Right cardiac atrium (tissue), 5 donors: ENCODE measurements at regions of chr18 and their contacts with region 1.

Region 1: GRCh38 chr18:9147440-9148202 is 11.0 kb downstream of the ANKRD12 start:
- DNase-seq: no peak
- ATAC-seq: peak; percentile 84 to 85
- H3K4me3 ChIP-seq: no peak overlapping the region
- H3K27ac ChIP-seq: no peak overlapping the region
- H3K4me1 ChIP-seq: peaks cover 2% of the 10 kb centered on the region
- H3K27me3 ChIP-seq: no peaks in the 10 kb centered on the region

Region 2: DNA sequence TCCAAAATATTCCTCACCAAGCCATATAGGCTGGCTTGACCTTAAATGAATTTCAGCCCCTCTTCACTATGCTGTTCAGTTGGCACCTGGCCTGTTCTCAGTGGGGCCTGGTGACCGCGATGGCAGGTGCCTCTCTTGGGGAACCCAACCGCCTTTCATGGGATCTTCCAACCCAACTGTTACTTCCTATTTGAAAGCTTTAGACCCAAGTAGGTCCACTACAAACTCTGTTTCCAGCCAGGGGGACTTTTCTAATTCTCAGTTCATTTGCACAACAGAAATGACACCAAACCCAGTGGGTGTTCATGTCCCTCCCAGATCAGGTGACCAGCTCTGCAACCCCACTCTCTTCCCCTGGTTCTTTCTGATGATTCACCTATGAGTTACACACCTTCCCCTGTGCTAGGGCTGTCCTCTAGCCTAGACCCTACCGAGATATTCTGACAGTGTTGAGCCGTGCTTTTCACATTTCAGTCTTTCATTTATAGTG is 80.8 kb before region 1 on chr18:
- intact Hi-C with region 1: loop called in 3 of 4 experiments (anchors 2 to 5 kb)
- DNase-seq: no peak
- ATAC-seq: no peak
- H3K4me3 ChIP-seq: no peak overlapping the region
- H3K27ac ChIP-seq: no peak overlapping the region
- H3K4me1 ChIP-seq: no peaks in the 10 kb centered on the region
- H3K27me3 ChIP-seq: no peaks in the 10 kb centered on the region

Region 3: DNA sequence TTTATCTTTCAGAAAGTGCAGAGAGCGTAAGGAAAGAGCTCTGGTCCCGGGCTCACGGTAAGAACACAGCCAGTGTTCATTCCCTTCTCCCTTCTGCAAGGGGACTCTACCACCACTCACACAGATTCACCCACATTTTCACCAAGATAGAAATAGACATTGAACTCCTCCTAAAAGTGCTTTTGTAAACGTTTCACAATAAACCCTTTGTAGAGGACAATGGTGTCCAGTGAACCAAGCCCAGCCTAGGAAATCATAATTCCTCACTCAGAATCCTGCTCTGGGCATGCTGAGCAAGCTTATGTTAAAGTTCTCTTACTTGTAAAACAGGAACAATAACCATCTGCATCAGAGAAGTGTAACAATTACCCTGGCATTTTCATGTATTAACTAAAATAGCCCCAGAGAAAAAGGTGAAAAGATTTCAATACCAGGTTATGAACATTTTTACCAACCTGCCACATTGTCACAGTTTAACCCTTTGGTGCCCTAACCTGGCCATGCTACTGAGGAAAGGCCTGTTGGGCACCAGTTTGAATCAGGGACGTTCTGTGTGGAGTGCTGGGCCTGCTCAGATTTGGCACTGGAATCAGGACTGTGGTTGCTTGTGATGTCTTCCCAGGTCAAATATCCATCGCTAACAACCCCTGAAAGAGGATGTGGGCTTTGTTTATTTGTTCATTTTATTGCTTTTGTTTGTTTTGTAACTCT is 67.6 kb before region 1 on chr18:
- intact Hi-C with region 1: loop called in 1 of 4 experiments (anchors 5 kb)
- DNase-seq: no peak
- ATAC-seq: no peak
- H3K4me3 ChIP-seq: no peak overlapping the region
- H3K27ac ChIP-seq: no peak overlapping the region
- H3K4me1 ChIP-seq: no peaks in the 10 kb centered on the region
- H3K27me3 ChIP-seq: no peaks in the 10 kb centered on the region

Region 4: GRCh38 chr18:9417073-9417841 is 269.6 kb after region 1 on chr18:
- intact Hi-C with region 1: no loop called
- DNase-seq: peak; percentile 46 to 81 (median 73)
- ATAC-seq: peak; percentile 89 to 93
- H3K4me3 ChIP-seq: peak overlapping the region; percentile 23
- H3K27ac ChIP-seq: no peak overlapping the region
- H3K4me1 ChIP-seq: no peaks in the 10 kb centered on the region
- H3K27me3 ChIP-seq: no peaks in the 10 kb centered on the region

Region 5: DNA sequence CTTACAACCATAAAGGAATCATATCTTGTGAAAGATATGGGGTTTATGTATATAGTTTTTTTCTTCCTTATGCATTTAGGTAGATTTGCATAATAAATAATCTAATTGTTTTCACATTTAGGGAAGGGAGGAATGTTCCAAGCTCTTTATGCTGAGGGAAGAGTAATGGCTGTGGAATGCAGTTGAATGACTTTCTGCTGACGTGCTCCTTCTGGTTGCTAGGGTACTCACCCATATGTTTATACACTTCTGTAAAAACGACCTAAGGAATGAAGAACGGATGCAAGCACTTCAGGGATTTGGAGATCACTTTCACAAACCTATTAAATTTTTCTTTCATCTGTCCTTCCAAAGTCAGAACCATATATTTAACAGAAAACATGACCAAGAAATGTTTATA is 495.9 kb after region 1 on chr18:
- intact Hi-C with region 1: no loop called
- DNase-seq: no peak
- ATAC-seq: peak; percentile 89 to 93
- H3K4me3 ChIP-seq: no peak overlapping the region
- H3K27ac ChIP-seq: no peak overlapping the region
- H3K4me1 ChIP-seq: no peaks in the 10 kb centered on the region
- H3K27me3 ChIP-seq: no peaks in the 10 kb centered on the region